Activated B cell treated with CpG ODN at 0.5 μM for 24 hours (primary cell): ENCODE measurements at regions of chr5 and their contacts with region 1.

Region 1: DNA sequence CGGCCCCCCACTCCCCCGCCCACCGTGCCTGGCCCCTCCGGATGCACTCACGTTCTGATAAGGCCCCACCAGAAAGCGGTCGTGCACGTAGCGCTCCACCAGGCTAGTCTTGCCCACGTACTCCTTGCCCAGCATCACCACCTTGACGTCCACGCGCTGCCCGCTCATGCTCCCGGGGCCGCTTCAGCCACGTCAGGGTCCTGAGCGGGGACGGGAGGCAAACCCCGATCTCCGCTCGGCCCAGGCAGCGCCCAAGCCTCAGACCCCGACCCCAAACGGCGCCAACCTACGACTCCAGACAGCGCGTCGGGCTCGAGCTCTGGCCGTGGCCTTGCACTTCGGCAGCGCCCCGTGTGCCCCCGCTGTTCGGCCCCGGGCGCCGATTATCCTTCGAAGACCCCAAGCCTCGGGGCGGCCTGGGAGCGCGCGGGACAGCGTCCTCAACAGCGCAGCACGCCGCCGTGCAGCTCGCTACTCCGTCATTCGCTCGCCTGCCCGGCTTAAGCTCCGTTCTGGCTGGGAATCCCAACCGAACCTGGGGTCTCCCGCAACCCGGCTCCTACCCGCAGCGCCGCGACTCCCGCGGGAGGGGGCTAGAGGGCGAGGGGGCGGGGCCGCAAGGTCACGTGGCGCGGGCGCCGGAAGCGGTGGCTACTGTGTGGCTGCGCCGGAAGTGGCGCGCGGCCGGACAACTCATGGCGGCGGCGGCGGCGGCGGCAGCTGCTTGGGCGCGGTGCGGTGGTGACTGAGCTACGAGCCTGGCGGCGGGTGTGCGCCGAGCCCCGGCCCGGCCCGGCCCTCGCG is at the starts of genes PRELID1 and RAB24:
- DNase-seq: peak; percentile 93
- ATAC-seq: peak; percentile 41
- H3K4me3 Mint-ChIP-seq: peak within 1 kb of the TSS; percentile 90
- H3K27ac Mint-ChIP-seq: peak within 1 kb of the TSS; percentile 89
- H3K4me1 Mint-ChIP-seq: peaks cover 75% of the 10 kb centered on the region
- H3K27me3 Mint-ChIP-seq: no peaks in the 10 kb centered on the region
- CTCF ChIP-seq: no peak
- total RNA-seq, gene PRELID1: 141 and 160 TPM in 2 replicates
- total RNA-seq, gene RAB24: 35.6 and 36.3 TPM in 2 replicates

Region 2: GRCh38 chr5:177133091-177133852 is 170.1 kb before region 1 on chr5 and contains the start of gene NSD1:
- CTCF ChIA-PET with region 1: no interaction called
- POLR2A ChIA-PET with region 1: interaction called, 4 read pairs
- intact Hi-C with region 1: loop called (anchors 1 kb)
- DNase-seq: peak; percentile 92
- ATAC-seq: peak; percentile 74
- H3K4me3 Mint-ChIP-seq: peak within 1 kb of the TSS; percentile 85
- H3K27ac Mint-ChIP-seq: peak within 1 kb of the TSS; percentile 87
- H3K4me1 Mint-ChIP-seq: peaks cover 52% of the 10 kb centered on the region
- H3K27me3 Mint-ChIP-seq: no peaks in the 10 kb centered on the region
- CTCF ChIP-seq: no peak
- total RNA-seq, gene NSD1: 103 and 108 TPM in 2 replicates

Region 3: GRCh38 chr5:177249761-177250526 is 53.4 kb before region 1 on chr5:
- CTCF ChIA-PET with region 1: no interaction called
- POLR2A ChIA-PET with region 1: no interaction called
- intact Hi-C with region 1: no loop called
- DNase-seq: no peak
- ATAC-seq: no peak
- H3K4me3 Mint-ChIP-seq: no peak overlapping the region
- H3K27ac Mint-ChIP-seq: no peak overlapping the region
- H3K4me1 Mint-ChIP-seq: no peaks in the 10 kb centered on the region
- H3K27me3 Mint-ChIP-seq: no peaks in the 10 kb centered on the region
- CTCF ChIP-seq: no peak

Region 4: GRCh38 chr5:177290816-177291596 is 12.3 kb before region 1 on chr5:
- CTCF ChIA-PET with region 1: interaction called, 3 read pairs
- POLR2A ChIA-PET with region 1: interaction called, 14 read pairs
- intact Hi-C with region 1: no loop called
- DNase-seq: no peak
- ATAC-seq: peak; percentile 63
- H3K4me3 Mint-ChIP-seq: peak overlapping the region; percentile 56
- H3K27ac Mint-ChIP-seq: peak overlapping the region; percentile 84
- H3K4me1 Mint-ChIP-seq: peaks cover 35% of the 10 kb centered on the region
- H3K27me3 Mint-ChIP-seq: no peaks in the 10 kb centered on the region
- CTCF ChIP-seq: no peak

Region 5: DNA sequence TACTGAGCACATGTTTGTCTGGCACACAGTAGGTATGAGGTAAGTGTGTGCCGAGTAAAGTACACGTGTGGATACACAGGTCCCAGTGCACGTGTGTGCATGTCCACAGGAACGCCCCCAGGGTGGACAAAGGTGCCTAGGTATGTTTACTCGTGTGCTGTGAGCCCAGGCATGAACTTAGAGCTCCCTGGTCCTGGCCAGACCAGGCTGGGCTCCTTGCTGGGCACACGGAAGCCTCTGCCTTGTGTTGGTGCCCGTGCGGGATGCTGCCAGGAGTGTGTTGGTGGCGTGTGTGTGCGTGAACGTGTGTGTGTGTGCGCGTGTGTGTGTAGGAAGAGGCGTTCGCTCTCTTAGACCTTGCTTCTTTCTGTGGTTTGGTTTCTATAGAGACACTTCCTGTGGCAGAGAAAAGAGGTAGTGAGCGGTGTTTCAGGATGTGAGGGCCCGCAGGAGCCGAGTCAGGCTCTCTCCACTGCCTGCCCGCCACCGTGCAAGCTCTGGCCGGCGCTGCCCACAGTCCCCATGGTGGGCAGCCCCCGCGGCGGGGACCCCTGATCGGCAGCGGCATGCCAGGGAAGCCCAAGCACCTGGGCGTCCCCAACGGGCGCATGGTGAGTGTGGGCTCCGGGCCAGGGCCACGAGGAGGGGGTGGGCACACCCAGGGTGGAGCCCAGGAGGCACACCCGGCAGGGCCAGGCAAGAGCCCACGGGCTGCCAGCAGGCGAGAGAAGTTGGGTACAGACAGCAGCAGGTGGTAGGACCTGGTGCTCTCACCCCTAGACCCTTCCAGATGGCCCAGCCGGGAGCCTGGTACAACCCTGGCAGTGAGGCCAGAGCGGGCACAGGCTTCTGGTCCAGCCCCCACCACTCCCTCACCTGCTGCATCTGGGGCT is 54.4 kb after region 1 on chr5 and contains the start of gene RGS14:
- CTCF ChIA-PET with region 1: interaction called, 4 read pairs
- POLR2A ChIA-PET with region 1: interaction called, 3 read pairs
- intact Hi-C with region 1: loop called (anchors 2 kb)
- DNase-seq: peak; percentile 71
- ATAC-seq: peak; percentile 89
- H3K4me3 Mint-ChIP-seq: peak within 1 kb of the TSS; percentile 85
- H3K27ac Mint-ChIP-seq: peak within 1 kb of the TSS; percentile 92
- H3K4me1 Mint-ChIP-seq: peaks cover 72% of the 10 kb centered on the region
- H3K27me3 Mint-ChIP-seq: no peaks in the 10 kb centered on the region
- CTCF ChIP-seq: no peak
- total RNA-seq, gene RGS14: 50.6 and 58.3 TPM in 2 replicates

Region 6: GRCh38 chr5:177370488-177371119 is 67.3 kb after region 1 on chr5:
- CTCF ChIA-PET with region 1: no interaction called
- POLR2A ChIA-PET with region 1: no interaction called
- intact Hi-C with region 1: no loop called
- DNase-seq: peak; percentile 48
- ATAC-seq: peak; percentile 85
- H3K4me3 Mint-ChIP-seq: peak overlapping the region; percentile 60
- H3K27ac Mint-ChIP-seq: no peak overlapping the region
- H3K4me1 Mint-ChIP-seq: peaks cover 53% of the 10 kb centered on the region
- H3K27me3 Mint-ChIP-seq: no peaks in the 10 kb centered on the region
- CTCF ChIP-seq: no peak

Region 7: DNA sequence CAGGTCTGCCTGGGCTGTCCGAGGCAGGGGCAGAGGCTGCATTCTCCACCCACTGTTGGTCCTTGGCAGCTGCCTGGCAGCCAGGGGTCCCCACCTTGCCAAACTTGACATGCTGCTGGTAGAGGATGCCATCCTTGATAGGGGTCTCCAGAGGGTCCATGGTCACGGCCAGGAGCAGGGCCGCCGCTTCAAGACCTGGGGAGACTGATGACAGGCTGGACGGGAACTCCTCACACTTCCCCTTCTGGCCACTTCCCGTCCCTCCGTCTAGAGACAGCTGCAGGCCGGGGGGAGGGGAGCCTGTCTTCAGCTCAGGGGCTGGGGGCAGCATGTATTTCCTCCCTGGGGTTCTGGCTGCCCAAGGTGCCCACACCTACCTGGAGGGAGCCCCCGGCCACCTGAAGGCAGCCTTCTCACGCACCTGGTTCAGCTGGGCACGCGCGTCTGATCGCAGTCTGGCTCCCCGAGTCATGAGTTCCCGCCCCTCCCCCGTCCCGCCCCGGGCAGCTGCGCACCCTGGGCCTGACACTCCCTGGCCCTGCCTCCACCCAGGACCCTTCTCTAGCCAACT is 206.1 kb after region 1 on chr5 and contains the start of gene DOK3:
- CTCF ChIA-PET with region 1: interaction called, 3 read pairs
- POLR2A ChIA-PET with region 1: interaction called, 4 read pairs
- intact Hi-C with region 1: loop called (anchors 1 kb)
- DNase-seq: peak; percentile 52
- ATAC-seq: peak; percentile 33
- H3K4me3 Mint-ChIP-seq: peak within 1 kb of the TSS; percentile 93
- H3K27ac Mint-ChIP-seq: peak within 1 kb of the TSS; percentile 96
- H3K4me1 Mint-ChIP-seq: peaks cover 60% of the 10 kb centered on the region
- H3K27me3 Mint-ChIP-seq: no peaks in the 10 kb centered on the region
- CTCF ChIP-seq: no peak
- total RNA-seq, gene DOK3: 82.5 and 88.5 TPM in 2 replicates

Region 8: DNA sequence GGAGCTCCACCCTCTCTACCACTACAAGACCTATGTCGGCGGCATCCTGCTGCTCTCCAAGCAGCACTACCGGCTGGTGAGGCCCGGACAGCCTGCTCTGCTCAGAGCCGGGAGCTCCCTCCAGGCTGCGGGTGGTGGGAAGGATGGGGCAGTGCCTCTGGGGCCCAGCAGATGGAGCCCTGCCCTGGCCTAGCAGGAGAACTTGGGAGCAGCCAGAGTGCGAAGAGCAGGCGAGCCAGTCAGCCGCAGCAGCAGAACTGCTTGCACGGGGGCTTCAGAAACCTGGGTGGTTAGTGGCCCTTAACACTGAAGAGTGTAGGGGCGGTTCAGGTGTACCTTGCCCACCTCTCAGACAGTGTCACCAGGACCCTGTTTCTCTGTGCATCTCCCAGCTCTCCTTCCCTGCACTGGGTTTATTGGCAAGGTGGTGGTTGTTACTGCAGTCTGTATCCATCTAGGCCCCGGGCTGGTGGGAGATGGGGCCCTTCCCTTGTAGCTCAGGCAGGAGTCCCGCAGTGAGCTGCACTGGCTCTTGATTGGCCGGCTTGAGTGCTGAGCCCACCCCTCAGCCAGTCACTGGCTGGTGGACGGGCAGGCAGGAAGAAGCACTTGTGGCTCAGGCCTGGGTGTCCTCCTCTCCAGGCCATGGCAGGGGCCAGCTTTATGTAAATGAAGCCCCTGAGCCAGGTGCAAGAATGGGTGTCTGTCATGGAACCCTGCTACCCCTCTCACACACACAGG is 304.3 kb after region 1 on chr5:
- CTCF ChIA-PET with region 1: no interaction called
- POLR2A ChIA-PET with region 1: no interaction called
- intact Hi-C with region 1: no loop called
- DNase-seq: peak; percentile 43
- ATAC-seq: peak; percentile 86
- H3K4me3 Mint-ChIP-seq: no peak overlapping the region
- H3K27ac Mint-ChIP-seq: no peak overlapping the region
- H3K4me1 Mint-ChIP-seq: peaks cover 19% of the 10 kb centered on the region
- H3K27me3 Mint-ChIP-seq: no peaks in the 10 kb centered on the region
- CTCF ChIP-seq: no peak